HEK293 (cell line): ENCODE measurements at regions of chr6 and their contacts with region 1.

Region 1: DNA sequence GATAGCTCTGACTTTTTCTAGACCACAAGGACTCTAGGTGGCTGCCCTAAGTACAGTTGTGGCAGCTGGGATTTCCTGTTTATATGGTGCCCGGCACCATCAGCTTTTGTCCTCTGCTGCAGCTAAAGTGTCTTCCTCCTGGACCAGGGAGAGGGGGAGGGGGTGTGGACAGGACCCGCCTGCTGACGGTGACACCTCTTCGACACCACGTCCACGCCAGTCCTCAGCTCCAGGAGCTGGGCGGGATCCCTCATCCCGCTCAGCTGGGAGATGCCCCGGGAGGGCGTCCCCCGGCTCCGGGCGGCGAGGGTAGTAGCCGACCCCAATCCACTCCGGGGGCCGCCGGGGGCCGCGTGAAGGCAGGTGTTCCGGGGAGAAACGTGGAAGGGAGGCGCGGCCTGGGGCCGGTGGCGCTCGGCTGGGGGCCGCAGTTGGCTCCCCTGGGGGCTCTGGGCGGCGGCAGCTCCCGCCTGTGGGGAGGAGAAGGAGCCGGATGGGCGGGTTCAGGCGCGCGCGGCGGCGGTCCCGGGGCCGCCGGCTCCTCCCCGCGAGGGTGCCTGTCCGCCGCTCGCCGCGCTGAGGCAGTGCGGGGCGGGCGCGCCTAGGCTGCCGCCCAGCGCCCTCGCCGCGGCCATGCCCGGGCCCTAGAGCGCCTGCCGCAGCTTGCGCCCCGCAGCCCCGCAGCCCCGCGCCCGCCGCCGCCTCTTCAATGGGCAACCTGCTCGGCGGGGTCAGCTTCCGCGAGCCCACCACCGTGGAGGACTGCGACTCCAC is at the start of gene OGFRL1:
- H3K4me3 ChIP-seq: peak within 1 kb of the TSS; percentile 82
- H3K27ac ChIP-seq: peak within 1 kb of the TSS; percentile 84; the same call in 1 of the 2 replicates
- H3K4me1 ChIP-seq: peaks cover 18% of the 10 kb centered on the region
- CTCF ChIP-seq: no peak; the same call in 1 of the 2 replicates

Region 2: DNA sequence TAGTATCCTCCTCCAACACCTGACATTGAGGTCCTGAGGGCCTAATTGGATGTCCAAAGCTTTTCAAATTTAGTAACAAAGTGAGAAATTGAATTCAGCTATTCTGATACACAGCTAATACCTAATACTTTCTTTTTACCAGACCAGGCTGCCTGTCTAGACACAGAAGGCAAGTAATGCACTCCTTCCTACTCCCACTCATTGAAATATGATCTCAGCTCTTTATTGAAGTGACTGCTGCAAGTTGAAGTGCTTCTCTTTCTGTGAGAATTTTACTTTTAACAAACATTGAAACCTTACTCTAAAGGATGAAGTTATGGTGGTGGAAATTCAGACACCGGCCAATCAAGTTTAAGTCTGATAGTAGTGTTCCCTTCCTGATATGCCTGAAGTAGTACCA is 90.6 kb before region 1 on chr6:
- CTCF ChIA-PET with region 1: interaction called, 11 read pairs
- POLR2A ChIA-PET with region 1: interaction called, 5 read pairs
- H3K4me3 ChIP-seq: no peak overlapping the region
- H3K27ac ChIP-seq: no peak overlapping the region
- H3K4me1 ChIP-seq: peaks cover 3% of the 10 kb centered on the region
- CTCF ChIP-seq: no peak

Region 3: DNA sequence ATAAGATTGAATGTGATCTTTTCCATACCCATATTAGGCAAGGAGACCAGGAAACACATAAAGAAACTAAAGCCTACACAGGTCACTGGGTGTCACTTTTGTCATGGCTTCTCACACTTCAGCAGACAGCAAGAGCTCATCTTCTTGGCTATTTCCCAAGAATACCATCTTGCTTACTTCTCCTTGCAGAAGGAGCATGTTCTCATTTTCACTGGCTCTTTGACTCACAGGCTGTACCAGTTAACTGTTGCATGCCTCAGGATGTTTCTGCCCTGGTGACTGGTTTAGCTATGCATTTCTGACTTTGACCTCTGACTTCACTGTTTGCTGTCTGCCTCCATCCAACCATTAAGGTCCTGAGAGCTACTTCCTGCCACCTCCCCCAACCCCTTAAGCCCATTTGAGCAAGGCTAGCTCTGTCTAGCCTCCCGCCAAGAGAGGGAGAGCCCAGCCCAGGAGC is 40.1 kb before region 1 on chr6:
- CTCF ChIA-PET with region 1: interaction called, 7 read pairs
- POLR2A ChIA-PET with region 1: interaction called, 29 read pairs
- H3K4me3 ChIP-seq: no peak overlapping the region
- H3K27ac ChIP-seq: no peak overlapping the region
- H3K4me1 ChIP-seq: peaks cover 4% of the 10 kb centered on the region; the same call in 1 of the 2 replicates
- CTCF ChIP-seq: no peak

Region 4: DNA sequence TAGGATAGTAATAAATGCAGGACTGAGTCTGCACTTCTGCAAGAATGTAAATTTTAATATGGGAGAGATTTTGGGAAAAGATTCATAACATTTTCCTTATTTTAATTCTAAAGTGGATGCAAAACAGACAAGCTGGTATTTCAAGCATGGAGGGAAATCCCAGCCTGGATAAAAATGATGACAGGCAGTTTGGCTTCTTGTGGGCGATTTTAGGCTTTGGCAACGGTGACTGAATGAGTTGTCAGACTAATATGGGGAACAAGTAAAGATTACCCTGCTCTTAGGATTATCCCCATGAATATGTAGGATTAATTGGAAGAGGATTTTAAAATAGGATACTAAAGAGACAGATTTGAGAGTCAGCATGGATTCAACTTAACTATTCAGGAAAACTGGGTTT is 21.2 kb after region 1 on chr6:
- CTCF ChIA-PET with region 1: interaction called, 10 read pairs
- POLR2A ChIA-PET with region 1: interaction called, 4 read pairs
- H3K4me3 ChIP-seq: no peak overlapping the region
- H3K27ac ChIP-seq: no peak overlapping the region
- H3K4me1 ChIP-seq: no peaks in the 10 kb centered on the region
- CTCF ChIP-seq: no peak